GM13977 (cell line): ENCODE measurements at regions of chr14 and their contacts with region 1.

Region 1: DNA sequence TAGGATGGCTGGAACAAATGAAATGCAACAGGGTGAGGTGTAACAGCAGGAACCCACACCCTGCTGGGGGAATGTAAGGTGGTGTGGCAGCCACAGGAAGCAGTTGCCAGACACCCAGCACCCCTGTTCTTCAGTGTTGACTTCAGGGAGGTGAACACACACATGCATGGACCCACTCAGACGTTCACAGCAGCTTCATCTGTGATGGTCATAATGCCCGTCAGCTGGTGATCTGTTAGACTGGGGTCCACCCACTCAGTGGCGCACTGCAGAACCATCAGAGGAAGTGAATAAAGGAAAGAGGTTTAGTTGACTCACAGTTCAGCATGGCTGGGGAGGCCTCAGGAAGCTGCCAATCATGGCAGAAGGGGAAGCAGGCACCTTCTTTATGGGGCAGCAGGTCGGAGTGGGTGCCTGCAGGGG is 22.7 kb upstream of the TEX22 start:
- DNase-seq: no peak
- CTCF ChIP-seq: no peak

Region 2: DNA sequence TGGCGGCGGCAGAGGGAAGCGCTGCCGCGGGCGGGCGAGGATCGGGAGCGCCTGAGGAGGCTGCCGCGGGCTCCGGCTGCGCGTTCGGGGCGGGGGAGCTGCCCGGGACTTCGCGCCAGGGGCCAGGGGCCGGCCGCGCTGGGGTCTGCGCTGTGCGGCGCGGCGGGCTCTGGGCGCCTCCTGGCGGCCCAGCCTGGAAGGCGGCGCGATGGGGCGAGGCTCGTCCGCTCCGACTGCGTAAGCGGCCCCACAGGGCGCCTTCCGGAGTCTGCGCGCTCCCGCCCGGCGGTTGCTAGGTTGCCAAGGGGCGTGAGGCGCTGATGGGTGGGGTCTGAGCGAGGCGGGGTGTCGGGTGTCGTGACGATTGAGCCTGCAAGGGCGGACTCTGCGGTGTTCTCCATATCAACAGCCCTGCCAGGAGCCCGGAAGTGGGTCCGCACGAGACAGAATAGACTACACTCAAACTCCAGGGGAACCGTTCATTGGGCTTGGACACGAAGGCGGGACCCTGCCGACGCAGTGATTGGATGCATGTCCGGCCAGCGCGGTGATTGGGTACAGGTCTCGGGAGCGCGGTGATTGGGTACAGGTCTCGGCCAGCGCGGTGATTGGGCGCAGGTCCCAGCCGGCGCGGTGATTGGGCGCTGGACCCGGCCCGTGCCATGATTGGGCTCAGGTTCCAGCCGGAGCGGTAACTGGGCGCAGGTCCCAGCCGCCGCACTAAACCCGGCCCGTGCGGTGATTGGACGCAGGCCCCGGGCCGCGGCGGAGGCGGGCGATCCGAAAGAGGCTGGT is 115.1 kb after region 1 on chr14 and contains the start of gene TEDC1:
- in situ Hi-C with region 1: loop called (anchors 10 kb)
- DNase-seq: peak; percentile 98
- CTCF ChIP-seq: peak; percentile 97

Region 3: GRCh38 chr14:105840266-105841021 is 464.8 kb after region 1 on chr14:
- in situ Hi-C with region 1: no loop called
- DNase-seq: no peak
- CTCF ChIP-seq: no peak